Left colon (tissue), 2 donors: ENCODE measurements at regions of chr17 and their contacts with region 1.

Region 1: GRCh38 chr17:45640141-45640850 is 143.8 kb upstream of the CRHR1 start:
- DNase-seq: peak; percentile 45 to 72
- ATAC-seq: peak; percentile 82

Region 2: DNA sequence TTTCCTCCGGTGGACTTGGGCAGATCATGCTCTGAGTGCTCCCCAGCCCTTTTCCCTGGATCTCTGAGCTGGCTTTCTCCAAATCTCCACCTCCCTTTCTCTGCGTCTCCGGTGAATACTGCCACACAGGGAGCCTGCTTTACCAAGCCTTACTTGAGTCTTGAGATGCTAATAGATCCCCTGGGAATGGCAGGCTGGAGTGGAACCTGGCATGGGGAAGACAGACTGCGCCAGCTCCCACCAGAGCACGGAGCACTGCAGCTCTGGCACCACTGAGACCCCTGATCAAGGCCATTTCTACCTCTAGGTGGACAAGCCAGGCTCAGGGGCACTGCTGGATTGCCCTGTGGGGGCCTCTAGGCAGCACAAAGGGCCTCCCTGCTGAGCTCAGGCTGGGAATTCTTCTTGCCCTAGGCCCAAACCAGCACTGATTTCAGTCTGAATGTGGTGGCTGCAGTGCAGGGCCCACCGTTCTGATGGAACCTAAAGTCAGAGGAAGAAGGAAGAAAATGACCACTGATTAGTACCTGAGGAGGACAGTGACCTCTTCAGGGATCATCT is 69.5 kb after region 1 on chr17:
- intact Hi-C with region 1: no loop called
- DNase-seq: no peak
- ATAC-seq: no peak

Region 3: DNA sequence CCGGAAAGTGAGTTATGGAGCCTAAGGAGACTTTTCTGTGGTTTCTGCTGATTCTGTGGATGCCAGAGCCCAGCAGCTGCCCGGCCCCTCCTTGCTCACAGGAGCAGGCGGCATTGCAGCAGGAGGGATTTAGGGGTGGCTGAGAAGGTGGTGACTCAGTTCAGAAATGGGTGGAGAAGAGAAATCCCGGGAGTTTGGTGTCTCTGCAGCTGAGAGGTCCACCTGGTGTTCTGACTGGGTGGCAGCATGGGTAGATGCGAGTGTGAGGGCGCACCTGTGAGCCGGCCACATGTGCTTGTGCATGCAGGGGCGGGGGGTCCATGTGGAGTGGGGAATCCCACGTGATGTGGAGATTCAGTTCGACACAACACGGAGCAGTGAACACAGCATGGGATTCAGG is 188.3 kb after region 1 on chr17:
- intact Hi-C with region 1: loop called (anchors 2 to 10 kb)
- DNase-seq: no peak
- ATAC-seq: no peak

Region 4: DNA sequence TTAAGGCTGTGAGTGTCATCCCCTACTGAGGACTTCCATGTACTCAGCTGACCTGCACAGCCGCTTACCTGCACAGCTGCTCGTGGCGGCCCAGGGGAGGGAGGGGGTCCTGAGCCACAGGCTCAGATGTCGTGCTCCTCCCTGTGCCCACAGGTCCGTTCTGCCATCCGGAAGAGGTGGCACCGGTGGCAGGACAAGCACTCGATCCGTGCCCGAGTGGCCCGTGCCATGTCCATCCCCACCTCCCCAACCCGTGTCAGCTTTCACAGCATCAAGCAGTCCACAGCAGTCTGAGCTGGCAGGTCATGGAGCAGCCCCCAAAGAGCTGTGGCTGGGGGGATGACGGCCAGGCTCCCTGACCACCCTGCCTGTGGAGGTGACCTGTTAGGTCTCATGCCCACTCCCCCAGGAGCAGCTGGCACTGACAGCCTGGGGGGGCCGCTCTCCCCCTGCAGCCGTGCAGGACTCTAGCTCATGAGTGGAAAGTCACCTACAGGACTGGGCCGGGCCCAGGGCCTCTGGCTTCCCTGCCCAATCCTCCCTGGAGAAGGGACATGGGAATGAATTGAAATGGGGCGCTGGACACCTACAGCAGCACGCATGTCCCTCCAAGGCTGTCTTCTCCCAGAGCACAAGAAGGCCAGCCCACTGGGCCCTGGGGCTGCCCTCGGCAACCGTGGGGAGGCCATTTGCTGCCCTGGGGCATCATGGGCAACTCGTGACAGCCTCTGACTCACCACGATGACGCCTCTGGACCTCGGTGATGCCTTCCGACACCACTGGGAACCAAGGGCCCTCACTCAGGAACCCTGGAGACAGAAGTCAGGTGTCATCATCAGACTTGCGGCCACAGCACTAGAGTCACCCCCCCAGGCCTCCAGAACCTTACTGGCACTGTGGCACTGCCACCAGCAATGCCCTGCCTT is 194.4 kb after region 1 on chr17:
- intact Hi-C with region 1: loop called (anchors 2 to 10 kb)
- DNase-seq: no peak
- ATAC-seq: no peak